Uterus (tissue), 4 donors: ENCODE measurements at regions of chr15 and their contacts with region 1.

Region 1: DNA sequence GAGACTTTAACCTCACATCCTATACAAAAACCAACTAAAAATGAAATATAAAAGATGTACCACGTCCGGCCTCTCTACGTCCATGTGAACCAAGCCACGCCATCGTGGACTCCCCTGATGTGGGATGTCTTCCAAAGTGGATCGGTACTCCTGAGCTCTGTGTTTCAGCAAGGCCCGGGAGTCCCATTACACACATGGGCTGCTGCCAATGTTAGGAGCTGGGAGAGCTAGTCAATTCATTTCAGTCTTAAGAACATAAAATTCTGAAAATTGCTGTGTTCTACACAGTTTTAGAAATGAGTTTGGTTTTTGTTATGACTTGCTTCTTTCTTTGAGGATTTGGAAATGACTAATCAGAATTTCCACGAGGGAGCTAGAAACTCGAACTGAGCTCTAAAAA is 131.0 kb downstream of the GABRG3 start:
- DNase-seq: no peak
- H3K4me3 ChIP-seq: no peak overlapping the region
- H3K27ac ChIP-seq: no peak overlapping the region
- H3K4me1 ChIP-seq: no peaks in the 10 kb centered on the region
- H3K27me3 ChIP-seq: no peaks in the 10 kb centered on the region
- CTCF ChIP-seq: no peak
- POLR2A ChIP-seq: no peak

Region 2: DNA sequence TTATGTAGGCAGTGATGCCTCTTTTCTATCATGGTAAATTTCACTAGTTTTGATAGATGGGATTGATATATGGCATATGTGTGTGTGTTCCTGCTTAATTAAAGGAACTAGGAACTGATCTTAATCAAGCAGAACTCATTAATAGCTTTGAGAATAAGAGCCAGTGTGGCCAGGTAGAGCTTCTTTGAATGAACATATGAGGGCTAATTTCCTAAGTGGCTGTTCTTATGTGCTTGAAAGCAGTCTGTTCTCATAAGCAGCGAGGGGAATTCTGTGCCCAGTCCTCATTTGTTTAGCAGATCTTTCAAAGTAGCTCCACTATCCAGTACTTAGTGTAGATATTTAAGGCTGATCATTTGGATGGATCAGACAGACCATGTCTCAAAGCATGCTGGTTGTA is 33.2 kb after region 1 on chr15:
- intact Hi-C with region 1: loop called (anchors 5 kb)
- DNase-seq: no peak
- H3K4me3 ChIP-seq: no peak overlapping the region
- H3K27ac ChIP-seq: no peak overlapping the region
- H3K4me1 ChIP-seq: no peaks in the 10 kb centered on the region
- H3K27me3 ChIP-seq: no peaks in the 10 kb centered on the region
- CTCF ChIP-seq: no peak
- POLR2A ChIP-seq: no peak